ENCODE measurements at regions of chr9 and their contacts with region 1.

Region 1: DNA sequence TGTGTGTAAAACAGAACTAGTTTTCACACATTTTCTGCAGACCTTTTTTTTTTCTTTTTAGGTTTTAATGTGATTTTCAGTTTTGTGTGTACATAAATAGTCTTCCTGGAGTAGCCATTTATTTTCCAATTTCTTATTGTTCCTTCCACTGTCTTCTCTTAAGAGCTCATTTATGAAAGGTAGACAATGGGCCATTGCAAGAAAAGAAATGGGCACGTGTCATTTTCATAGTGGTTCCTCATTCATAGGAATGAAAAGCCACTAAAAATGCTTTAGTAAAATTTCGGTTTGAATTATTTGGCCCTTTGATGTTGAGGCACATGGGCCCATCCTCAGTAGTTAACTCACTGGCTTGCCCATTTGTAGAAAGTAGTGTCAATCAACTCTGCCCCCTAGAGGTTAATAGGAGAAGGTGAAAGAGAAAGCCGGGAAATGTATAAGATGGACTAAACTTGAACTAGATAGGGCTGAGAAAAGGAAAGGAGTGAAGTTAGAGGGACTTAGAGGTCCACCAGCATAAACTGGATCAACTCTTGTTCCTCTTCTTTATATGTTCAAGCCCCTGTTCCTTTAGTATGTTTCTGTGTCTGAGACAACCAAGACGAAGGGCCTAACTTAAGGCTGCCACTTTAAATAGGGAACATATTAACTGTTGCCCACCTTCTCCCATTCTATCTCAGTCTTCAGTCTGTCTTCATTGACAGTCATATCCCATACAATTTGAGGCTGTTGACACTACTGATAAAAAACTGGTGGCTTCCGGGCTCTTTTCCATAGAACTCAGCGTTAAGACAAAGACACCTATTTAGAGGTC is 72.6 kb downstream of the SMARCA2 start:
- DNase-seq: peak; percentile 26
- H3K4me3 Mint-ChIP-seq: no peak overlapping the region
- H3K27ac Mint-ChIP-seq: no peak overlapping the region
- H3K4me1 Mint-ChIP-seq: peaks cover 10% of the 10 kb centered on the region
- H3K27me3 Mint-ChIP-seq: no peaks in the 10 kb centered on the region

Region 2: GRCh38 chr9:1604942-1605560 is 482.7 kb before region 1 on chr9:
- CTCF ChIA-PET with region 1: interaction called, 3 read pairs
- intact Hi-C with region 1: loop called (anchors 10 kb)
- DNase-seq: peak; percentile 5
- H3K4me3 Mint-ChIP-seq: no peak overlapping the region
- H3K27ac Mint-ChIP-seq: no peak overlapping the region
- H3K4me1 Mint-ChIP-seq: no peaks in the 10 kb centered on the region
- H3K27me3 Mint-ChIP-seq: peaks cover 9% of the 10 kb centered on the region

Region 3: DNA sequence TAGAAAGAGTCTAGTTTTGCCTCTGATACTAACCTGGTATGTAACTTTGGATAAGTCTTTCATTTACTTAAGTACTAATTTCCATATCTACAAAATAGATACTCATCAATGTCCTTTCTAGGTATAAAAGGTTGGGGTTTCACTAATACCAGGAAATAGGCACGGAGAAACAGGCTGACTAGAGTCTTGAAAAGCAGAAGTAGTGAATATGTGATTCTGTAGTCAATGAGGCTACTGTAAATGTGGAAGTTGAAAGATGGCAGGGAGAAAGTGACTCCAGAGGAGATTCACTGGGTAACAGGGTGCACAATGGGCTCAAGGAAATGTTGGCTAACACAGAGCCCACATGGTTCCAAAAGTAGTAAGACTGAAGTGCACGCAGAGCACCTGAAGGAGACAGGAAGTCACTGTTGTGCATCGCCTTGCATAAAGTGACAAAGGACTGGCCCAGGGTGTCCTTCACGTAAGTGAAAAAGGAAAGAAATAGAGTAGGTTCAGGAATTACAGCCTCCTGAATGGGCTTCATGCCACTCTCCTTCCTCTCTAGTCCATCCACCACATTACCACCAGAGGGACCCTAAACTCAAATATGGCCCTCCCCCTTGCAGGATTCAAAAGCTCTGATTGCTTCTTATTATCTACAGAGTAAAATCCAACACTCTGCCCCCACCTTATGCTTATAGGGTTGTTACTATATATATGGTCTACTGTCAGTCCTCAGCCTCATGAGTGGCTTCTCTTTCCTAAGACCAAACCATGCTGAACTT is 360.5 kb before region 1 on chr9:
- CTCF ChIA-PET with region 1: interaction called, 3 read pairs
- intact Hi-C with region 1: loop called (anchors 1 kb)
- DNase-seq: peak; percentile 16
- H3K4me3 Mint-ChIP-seq: no peak overlapping the region
- H3K27ac Mint-ChIP-seq: no peak overlapping the region
- H3K4me1 Mint-ChIP-seq: no peaks in the 10 kb centered on the region
- H3K27me3 Mint-ChIP-seq: peaks cover 5% of the 10 kb centered on the region

Region 4: DNA sequence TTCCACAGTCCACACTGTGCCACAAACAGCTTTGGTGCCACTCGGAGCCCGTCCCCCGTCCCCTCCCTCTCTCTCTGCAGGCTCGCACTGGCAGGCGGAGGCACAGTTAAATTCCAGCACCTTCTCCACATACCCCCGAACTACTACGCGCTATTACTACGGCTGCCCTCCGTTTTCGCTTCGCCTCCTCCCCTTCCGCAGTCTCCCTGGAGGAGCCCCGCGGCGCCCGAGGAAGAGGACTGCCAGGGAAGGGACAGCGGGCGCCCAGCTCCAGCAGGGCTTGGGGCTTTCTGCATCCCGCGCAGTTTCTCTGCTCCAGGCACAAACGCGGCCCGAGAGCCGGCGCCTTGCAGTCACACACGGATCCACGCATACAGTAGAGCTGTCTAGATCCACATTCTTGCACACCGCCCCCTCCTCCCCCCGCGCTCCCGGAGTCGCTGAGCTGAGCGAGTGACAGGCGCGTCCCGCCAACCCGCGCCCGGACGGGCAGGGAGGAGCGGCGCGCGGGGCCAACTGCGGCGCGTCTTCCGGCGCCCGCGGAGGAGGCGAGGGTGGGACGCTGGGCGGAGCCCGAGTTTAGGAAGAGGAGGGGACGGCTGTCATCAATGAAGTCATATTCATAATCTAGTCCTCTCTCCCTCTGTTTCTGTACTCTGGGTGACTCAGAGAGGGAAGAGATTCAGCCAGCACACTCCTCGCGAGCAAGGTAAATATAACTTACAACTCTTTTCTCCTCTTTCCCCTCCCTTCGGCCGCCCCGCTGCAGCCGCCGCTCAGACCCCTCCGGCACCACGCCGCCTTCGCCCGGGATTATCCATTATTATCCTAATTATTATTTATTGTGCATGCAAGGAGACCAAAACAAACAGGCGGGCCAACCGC is 72.8 kb before region 1 on chr9 and contains the start of gene SMARCA2:
- CTCF ChIA-PET with region 1: interaction called, 5 read pairs
- intact Hi-C with region 1: loop called (anchors 1 kb)
- DNase-seq: peak; percentile 97
- H3K4me3 Mint-ChIP-seq: peak within 1 kb of the TSS; percentile 92
- H3K27ac Mint-ChIP-seq: peak within 1 kb of the TSS; percentile 99
- H3K4me1 Mint-ChIP-seq: peaks cover 44% of the 10 kb centered on the region
- H3K27me3 Mint-ChIP-seq: no peaks in the 10 kb centered on the region
- total RNA-seq, gene SMARCA2: 87.8 to 89.9 TPM

Region 5: DNA sequence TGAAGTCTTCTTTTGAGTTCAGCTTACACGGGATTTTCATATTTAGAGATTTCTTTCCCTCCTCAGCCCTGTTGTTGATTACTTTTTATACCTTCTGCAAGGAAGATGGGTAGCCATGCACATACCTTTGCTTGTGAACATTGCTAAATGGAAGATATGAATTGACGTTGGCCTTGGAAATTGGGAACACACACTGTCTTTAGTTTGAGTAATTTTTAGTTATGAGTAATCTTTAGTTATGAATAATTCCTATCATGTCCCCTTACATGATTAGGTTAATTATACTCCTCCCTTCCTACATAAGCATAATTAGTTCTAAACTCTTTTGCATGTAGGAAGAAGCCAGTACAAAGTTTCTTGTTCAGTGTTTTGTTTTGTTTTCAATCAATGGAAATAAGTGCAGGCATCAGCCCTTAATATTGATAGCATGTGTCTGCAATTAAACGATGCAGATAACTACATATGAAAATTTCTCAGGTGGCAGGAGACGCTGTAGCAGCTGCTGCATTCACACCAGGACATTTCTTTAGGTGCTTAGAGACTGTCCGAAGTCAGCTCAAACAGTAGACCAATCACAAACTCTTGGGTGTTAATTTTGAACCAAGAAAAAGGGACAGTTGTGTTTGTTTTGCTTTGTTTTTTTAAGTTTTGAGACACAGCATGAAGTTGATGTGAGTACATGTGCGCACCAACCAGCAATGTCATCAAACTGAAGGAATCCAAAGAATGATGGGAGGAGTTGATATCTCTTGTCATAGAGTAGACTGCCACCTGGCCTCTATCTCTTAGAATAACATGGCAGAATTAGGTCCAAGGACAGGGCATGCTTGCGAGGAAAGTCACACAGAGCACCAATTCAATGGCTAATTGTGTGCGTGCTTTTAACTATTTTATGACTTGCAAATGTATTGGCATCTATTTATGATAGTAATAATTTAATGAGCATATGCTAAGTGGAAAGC is 21.1 kb before region 1 on chr9:
- CTCF ChIA-PET with region 1: interaction called, 4 read pairs
- intact Hi-C with region 1: loop called (anchors 2 kb)
- DNase-seq: no peak
- H3K4me3 Mint-ChIP-seq: no peak overlapping the region
- H3K27ac Mint-ChIP-seq: no peak overlapping the region
- H3K4me1 Mint-ChIP-seq: peaks cover 13% of the 10 kb centered on the region
- H3K27me3 Mint-ChIP-seq: no peaks in the 10 kb centered on the region

Region 6: DNA sequence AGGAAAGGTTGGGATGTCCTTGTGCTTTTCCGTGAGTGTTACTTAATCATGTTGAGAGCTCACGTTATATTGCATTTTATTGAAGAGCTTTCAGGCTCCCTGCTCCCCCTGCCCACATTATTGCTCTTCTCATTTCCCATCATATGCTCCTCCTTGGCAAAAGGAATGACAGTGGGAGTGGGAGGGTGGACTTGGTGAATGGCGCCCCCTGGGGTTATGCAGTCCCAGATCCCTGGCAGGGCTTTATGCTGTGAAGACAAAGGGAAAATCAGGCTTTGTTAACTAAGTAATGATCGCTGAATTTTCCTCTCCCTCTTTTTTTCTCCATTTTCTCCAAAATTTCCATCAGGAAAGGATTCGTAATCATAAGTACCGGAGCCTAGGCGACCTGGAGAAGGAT is 94.1 kb after region 1 on chr9:
- CTCF ChIA-PET with region 1: no interaction called
- intact Hi-C with region 1: loop called (anchors 5 kb)
- DNase-seq: peak; percentile 37
- H3K4me3 Mint-ChIP-seq: no peak overlapping the region
- H3K27ac Mint-ChIP-seq: no peak overlapping the region
- H3K4me1 Mint-ChIP-seq: peaks cover 6% of the 10 kb centered on the region
- H3K27me3 Mint-ChIP-seq: no peaks in the 10 kb centered on the region

Measured in activated naive CD4-positive, alpha-beta T cell treated with anti-CD3 and anti-CD28 coated beads for 36 hours (primary cell).